ENCODE measurements at regions of chr12 and their contacts with region 1.

Region 1: DNA sequence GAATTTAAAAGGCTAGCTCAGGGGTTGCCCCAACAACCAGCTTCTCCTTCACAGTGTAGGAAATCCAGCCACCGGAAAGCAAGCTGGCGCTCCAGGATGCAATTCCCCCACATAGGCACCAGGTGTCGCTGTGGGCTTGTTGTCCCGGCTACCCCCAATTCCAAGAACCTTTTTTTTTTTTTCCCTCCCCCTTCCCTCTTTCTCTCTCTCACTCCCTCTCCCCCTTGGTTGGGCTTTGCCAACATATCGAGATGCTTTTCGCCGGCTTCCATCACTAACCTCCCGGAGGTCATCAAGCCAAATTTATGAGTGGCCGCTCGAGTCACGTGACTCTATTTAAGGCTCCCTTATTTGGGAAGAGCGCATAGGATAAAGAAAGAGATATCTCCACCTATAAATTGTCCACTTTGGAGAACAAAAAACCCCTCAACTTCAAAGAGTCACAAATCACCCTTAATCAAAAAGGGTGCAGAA is at the start of gene HOXC5:
- DNase-seq: peak; percentile 48
- H3K4me3 Mint-ChIP-seq: peak within 1 kb of the TSS; percentile 49
- H3K27ac Mint-ChIP-seq: peak within 1 kb of the TSS; percentile 52
- H3K4me1 Mint-ChIP-seq: peaks cover 20% of the 10 kb centered on the region
- H3K27me3 Mint-ChIP-seq: peaks cover 79% of the 10 kb centered on the region
- total RNA-seq, gene HOXC5: not detected in 2 replicates

Region 2: DNA sequence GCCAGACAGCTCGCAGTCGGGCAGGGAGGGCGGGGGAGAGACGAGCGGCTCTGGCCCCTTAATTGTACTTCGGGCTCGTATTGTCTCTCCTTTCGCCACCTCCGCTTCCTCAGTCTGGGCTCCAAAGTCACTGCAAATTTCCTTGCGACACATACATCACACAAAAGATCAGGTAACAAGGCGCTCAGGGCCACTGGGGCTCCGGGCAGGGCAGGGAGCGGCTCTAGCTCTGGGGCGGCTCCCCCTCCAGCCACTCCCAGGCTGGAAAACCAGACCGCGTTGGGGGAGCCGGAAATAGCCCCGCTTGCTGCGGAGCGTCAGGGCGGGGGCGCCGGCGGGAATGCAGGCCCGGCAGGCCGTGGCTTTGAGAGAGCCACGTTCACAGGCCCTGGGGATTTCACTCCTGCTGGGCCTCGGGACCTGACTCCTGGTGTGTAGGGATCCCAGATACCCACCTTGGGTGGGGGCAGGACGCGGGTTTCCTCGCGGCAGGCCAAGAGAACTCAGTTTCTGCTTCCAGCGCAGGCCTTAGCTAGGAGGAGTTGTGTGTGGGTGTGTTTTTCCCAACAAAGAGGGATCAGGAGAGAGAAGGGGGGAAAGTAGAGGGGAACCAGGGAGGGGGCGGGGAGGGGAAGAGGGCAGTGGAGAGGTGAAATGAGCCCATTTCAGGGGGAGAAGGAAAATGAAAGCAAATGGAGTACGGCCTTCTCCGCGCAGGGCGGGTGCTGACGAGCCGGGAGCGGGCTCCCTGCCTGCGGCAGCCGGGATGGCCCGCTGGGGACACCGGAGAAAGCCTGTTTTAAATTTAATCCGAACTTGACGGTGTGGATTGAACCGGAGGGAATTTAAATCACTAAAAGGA is 37.1 kb before region 1 on chr12:
- intact Hi-C with region 1: loop called (anchors 5 kb)
- DNase-seq: no peak
- H3K4me3 Mint-ChIP-seq: peak overlapping the region; percentile 80
- H3K27ac Mint-ChIP-seq: peak overlapping the region; percentile 76
- H3K4me1 Mint-ChIP-seq: peaks cover 22% of the 10 kb centered on the region
- H3K27me3 Mint-ChIP-seq: peaks cover 87% of the 10 kb centered on the region

Region 3: DNA sequence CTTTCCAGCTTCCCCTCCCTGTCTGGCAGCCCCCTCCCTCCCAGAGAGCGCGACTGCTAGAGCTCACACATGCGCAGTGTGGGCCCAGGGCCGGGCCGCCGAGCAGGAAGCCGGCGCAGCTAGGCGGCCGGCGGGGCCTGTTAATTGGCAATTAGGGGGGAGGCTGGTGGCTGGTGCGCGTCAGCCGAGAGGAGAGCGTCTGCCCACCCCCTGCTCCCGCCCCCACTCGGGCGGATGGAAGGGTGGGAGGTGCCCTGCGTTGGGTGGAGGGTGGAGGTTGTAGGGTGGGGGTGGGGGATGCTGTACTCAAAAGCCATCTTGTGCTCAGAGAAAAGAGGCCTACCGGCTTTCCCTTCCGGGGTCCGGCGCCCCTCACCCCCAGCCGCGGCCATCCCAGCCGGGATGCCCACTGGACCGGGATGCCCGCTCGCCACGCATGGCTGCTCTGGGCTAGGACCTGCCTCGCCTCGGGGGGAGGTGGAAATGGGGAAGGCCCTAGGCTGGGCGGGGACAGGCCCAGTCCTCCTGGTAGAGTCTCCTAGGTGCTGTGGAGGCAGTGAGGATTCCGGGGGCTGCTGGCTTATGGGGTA is 14.7 kb before region 1 on chr12:
- intact Hi-C with region 1: loop called (anchors 2 kb)
- DNase-seq: peak; percentile 62
- H3K4me3 Mint-ChIP-seq: peak overlapping the region; percentile 82
- H3K27ac Mint-ChIP-seq: peak overlapping the region; percentile 67
- H3K4me1 Mint-ChIP-seq: peaks cover 21% of the 10 kb centered on the region
- H3K27me3 Mint-ChIP-seq: peaks cover 71% of the 10 kb centered on the region

Region 4: GRCh38 chr12:54047964-54048303 is 15.3 kb after region 1 on chr12:
- intact Hi-C with region 1: loop called (anchors 2 kb)
- DNase-seq: no peak
- H3K4me3 Mint-ChIP-seq: no peak overlapping the region
- H3K27ac Mint-ChIP-seq: peak overlapping the region; percentile 25
- H3K4me1 Mint-ChIP-seq: peaks cover 20% of the 10 kb centered on the region
- H3K27me3 Mint-ChIP-seq: peaks cover 80% of the 10 kb centered on the region

Region 5: GRCh38 chr12:54191550-54192022 is 158.9 kb after region 1 on chr12:
- intact Hi-C with region 1: loop called (anchors 1 kb)
- DNase-seq: peak; percentile 64
- H3K4me3 Mint-ChIP-seq: no peak overlapping the region
- H3K27ac Mint-ChIP-seq: no peak overlapping the region
- H3K4me1 Mint-ChIP-seq: peaks cover 32% of the 10 kb centered on the region
- H3K27me3 Mint-ChIP-seq: peaks cover 43% of the 10 kb centered on the region

Region 6: DNA sequence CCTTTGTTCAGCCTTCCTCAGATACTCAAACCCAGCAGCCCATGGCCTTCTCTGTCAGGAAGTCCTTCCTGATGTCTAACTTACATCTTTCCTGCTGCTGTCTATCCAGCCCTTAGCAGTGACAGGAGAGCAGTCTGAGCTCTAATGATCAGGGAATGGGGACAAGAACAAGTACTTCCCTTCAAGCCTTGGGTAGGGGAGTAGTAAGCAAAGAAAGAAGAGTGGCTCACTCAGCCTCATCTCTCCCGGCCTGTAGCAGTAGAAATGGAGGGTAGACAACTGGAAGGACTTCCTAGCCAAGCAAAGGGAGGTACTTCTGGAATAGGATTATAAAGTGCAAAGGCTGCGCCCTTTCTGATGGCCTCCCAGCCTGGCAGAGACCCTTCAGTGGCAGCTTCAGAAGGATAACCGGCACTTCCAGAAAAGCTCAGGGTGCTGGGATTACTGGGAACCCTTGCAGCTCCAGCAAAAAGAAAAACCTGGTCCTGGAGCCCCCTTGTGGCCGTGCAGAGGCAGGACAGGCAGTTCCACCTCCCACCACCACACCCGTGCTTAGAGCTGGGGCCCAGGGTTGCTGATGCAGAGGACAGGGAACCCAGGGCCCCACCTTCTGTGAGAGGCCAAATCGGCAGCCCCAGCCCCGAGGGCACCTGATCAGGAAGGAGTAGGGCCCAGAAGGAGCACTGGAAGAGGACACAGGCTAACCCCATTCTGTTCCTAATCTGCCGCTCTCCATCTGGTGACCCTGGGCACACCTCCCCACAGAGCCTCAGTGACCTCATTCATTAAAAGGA is 168.5 kb after region 1 on chr12:
- intact Hi-C with region 1: loop called (anchors 1 kb)
- DNase-seq: peak; percentile 47
- H3K4me3 Mint-ChIP-seq: no peak overlapping the region
- H3K27ac Mint-ChIP-seq: no peak overlapping the region
- H3K4me1 Mint-ChIP-seq: no peaks in the 10 kb centered on the region
- H3K27me3 Mint-ChIP-seq: peaks cover 48% of the 10 kb centered on the region

Measured in activated T-helper 1 cell treated with anti-CD3 and anti-CD28 coated beads, Interleukin-12 subunit alpha, Interleukin-12 subunit beta, Interleukin-2, Interleukin-4 antibody, amounts not matched to agents 30 ng/mL and 10 ng/mL and 1 ng/mL, durations not matched to agents 14 hours and 24 hours and 36 hours (primary cell).